ENCODE measurements at regions of chr6 and their contacts with region 1.

Region 1: DNA sequence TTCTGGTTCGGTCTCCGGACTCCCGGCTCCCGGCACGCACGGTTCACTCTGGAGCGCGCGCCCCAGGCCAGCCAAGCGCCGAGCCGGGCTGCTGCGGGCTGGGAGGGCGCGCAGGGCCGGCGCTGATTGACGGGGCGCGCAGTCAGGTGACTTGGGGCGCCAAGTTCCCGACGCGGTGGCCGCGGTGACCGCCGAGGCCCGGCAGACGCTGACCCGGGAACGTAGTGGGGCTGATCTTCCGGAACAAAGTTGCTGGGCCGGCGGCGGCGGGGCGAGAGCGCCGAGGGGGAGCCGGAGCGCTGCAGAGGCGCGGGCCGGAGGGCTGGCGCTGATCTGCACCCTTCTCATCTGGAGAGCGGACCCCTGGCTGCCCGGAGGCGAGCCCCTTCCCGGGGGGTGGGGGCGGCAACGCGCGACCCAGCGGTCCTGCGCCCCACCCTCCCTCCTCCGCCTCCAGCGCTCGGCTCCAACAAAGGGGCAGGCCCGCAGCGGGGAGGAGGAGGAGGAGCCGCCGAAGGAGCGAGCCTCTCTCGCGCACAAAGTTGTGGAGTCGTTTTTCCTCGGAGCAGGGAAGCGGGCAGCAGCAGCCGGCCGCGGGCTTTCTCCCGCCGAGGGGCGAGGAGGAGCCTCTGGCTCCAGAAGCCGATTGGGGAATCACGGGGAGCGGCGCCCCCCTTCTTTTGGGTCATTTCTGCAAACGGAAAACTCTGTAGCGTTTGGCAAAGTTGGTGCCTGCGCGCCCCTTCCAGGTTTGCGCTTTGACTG is at the start of gene UTRN:
- DNase-seq: peak; percentile 61
- H3K4me3 Mint-ChIP-seq: peak within 1 kb of the TSS; percentile 90
- H3K27ac Mint-ChIP-seq: peak within 1 kb of the TSS; percentile 73
- H3K4me1 Mint-ChIP-seq: peaks cover 16% of the 10 kb centered on the region
- H3K27me3 Mint-ChIP-seq: peaks cover 10% of the 10 kb centered on the region
- total RNA-seq, gene UTRN: 37.8 to 38.1 TPM

Region 2: DNA sequence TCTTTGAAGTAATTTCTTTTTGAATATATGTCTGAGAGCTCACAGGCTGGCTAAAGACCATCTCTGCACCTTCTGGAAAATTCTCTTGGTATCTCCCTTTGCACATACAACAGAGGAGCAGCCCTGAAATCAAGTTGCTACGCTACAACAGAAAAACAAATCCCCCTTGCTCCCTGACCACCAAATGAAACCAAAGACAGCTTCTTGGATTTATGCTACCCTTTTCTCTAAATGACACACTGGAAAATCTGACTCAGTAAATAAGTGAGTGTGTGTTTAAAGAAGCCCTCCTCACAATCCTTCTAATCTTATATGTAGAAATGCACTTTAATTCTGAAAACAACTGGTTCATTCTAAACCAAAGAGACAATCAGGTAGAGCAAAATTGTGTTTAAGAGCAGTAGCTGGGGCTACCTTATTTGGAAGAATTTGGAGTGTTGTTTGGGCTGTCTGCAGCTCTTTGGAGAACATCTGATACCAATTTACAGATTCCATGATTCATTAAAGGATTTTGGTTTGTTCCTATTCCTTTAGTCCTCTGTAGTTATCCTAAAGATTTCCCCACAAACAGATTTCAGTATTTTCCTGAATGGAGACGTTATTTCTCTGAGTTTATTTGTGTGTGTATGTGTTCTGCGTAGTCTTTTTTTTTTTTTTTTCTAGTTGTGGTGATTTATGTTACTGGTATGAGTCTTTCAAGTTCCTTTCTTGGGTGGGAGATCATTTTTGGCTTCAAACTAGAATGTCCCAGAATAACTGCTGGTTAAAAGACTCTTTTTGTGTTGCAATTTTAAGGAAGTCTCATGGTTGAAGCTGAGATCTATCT is 36.3 kb before region 1 on chr6:
- CTCF ChIA-PET with region 1: no interaction called
- POLR2A ChIA-PET with region 1: interaction called, 3 read pairs
- intact Hi-C with region 1: loop called (anchors 1 kb)
- DNase-seq: peak; percentile 29
- H3K4me3 Mint-ChIP-seq: peak overlapping the region; percentile 21
- H3K27ac Mint-ChIP-seq: peak overlapping the region; percentile 71
- H3K4me1 Mint-ChIP-seq: peaks cover 18% of the 10 kb centered on the region
- H3K27me3 Mint-ChIP-seq: peaks cover 22% of the 10 kb centered on the region

Region 3: GRCh38 chr6:144334131-144334708 is 49.3 kb after region 1 on chr6:
- CTCF ChIA-PET with region 1: no interaction called
- POLR2A ChIA-PET with region 1: no interaction called
- intact Hi-C with region 1: loop called (anchors 2 kb)
- DNase-seq: peak; percentile 84
- H3K4me3 Mint-ChIP-seq: peak overlapping the region; percentile 67
- H3K27ac Mint-ChIP-seq: peak overlapping the region; percentile 67
- H3K4me1 Mint-ChIP-seq: peaks cover 40% of the 10 kb centered on the region
- H3K27me3 Mint-ChIP-seq: no peaks in the 10 kb centered on the region

Region 4: GRCh38 chr6:144411332-144412190 is 126.6 kb after region 1 on chr6:
- CTCF ChIA-PET with region 1: no interaction called
- POLR2A ChIA-PET with region 1: no interaction called
- intact Hi-C with region 1: loop called (anchors 5 kb)
- DNase-seq: no peak
- H3K4me3 Mint-ChIP-seq: peak overlapping the region; percentile 62
- H3K27ac Mint-ChIP-seq: peak overlapping the region; percentile 57
- H3K4me1 Mint-ChIP-seq: peaks cover 54% of the 10 kb centered on the region
- H3K27me3 Mint-ChIP-seq: no peaks in the 10 kb centered on the region

Region 5: DNA sequence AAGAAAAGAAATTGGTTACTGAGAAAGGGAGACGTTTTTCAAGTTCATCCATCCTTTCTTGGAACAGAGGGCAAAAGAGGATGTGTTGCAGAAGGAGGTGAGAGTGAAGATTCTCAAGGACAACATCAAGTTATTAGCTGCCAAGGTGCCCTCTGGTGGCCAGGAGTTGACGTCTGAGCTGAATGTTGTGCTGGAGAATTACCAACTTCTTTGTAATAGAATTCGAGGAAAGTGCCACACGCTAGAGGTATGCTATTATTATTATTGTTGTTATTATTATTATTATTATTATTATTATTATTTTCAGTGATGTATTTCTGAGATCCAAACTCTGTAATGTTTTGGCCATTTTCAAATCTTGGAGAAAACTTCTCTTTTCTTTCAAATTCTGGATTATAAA is 197.2 kb after region 1 on chr6:
- CTCF ChIA-PET with region 1: interaction called, 6 read pairs
- POLR2A ChIA-PET with region 1: no interaction called
- intact Hi-C with region 1: loop called (anchors 1 kb)
- DNase-seq: peak; percentile 83
- H3K4me3 Mint-ChIP-seq: no peak overlapping the region
- H3K27ac Mint-ChIP-seq: no peak overlapping the region
- H3K4me1 Mint-ChIP-seq: peaks cover 10% of the 10 kb centered on the region
- H3K27me3 Mint-ChIP-seq: no peaks in the 10 kb centered on the region